ENCODE measurements at regions of chr1 and their contacts with region 1.

Region 1: GRCh38 chr1:89719502-89720306 is 86.8 kb downstream of the LRRC8C start:
- DNase-seq: no peak
- ATAC-seq: peak; percentile 25 to 48
- H3K4me3 ChIP-seq: no peak overlapping the region
- H3K27ac ChIP-seq: peak overlapping the region; percentile 58
- H3K4me1 ChIP-seq: peaks cover 8% of the 10 kb centered on the region
- H3K27me3 ChIP-seq: no peaks in the 10 kb centered on the region

Region 2: GRCh38 chr1:89657886-89658285 is 61.8 kb before region 1 on chr1:
- intact Hi-C with region 1: loop called in 1 of 4 experiments (anchors 10 kb)
- DNase-seq: no peak
- ATAC-seq: no peak
- H3K4me3 ChIP-seq: no peak overlapping the region
- H3K27ac ChIP-seq: no peak overlapping the region
- H3K4me1 ChIP-seq: peaks cover 8% of the 10 kb centered on the region
- H3K27me3 ChIP-seq: no peaks in the 10 kb centered on the region

Region 3: GRCh38 chr1:89780721-89781120 is 61.0 kb after region 1 on chr1:
- intact Hi-C with region 1: no loop called
- DNase-seq: no peak
- ATAC-seq: no peak
- H3K4me3 ChIP-seq: no peak overlapping the region
- H3K27ac ChIP-seq: no peak overlapping the region
- H3K4me1 ChIP-seq: no peaks in the 10 kb centered on the region
- H3K27me3 ChIP-seq: no peaks in the 10 kb centered on the region

Region 4: DNA sequence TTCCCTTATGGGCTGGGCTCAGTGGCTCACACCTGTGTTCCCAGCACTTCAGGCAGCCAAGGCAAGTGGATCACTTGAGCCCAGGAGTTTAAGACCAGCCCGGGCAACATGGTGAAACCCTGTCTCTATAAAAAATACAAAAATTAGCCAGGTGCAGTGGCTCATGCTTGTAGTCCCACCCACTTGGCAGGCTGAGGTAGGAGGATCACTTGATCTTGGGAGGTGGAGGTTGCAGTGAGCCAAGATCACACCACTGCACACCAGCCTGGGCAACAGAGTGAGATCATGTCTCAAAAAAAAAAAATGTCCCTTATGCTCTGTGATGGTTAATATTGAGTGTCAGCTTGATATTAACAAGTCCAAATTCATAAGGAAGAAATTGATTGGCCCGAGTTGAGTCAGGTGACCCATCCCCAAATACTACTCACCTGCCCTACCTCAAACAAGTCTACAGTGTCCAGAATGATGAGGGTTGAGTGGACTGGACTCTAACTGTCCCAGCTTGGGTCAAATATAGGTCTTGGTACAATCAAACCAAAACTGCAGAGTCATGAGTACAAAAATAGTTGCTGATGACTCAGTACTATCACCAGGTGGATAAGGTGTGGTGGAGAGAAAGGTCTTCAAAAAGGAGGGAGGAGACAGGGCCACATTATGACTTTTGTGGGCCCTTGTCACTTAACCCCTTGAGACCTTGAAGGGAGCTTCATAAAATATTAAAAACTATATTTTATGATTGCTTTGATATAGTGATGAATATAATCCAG is 436.2 kb after region 1 on chr1:
- intact Hi-C with region 1: no loop called
- DNase-seq: no peak
- ATAC-seq: no peak
- H3K4me3 ChIP-seq: no peak overlapping the region
- H3K27ac ChIP-seq: no peak overlapping the region
- H3K4me1 ChIP-seq: no peaks in the 10 kb centered on the region
- H3K27me3 ChIP-seq: no peaks in the 10 kb centered on the region

Measured in right cardiac atrium (tissue), 5 donors.